ENCODE measurements at regions of chr18 and their contacts with region 1.

Region 1: DNA sequence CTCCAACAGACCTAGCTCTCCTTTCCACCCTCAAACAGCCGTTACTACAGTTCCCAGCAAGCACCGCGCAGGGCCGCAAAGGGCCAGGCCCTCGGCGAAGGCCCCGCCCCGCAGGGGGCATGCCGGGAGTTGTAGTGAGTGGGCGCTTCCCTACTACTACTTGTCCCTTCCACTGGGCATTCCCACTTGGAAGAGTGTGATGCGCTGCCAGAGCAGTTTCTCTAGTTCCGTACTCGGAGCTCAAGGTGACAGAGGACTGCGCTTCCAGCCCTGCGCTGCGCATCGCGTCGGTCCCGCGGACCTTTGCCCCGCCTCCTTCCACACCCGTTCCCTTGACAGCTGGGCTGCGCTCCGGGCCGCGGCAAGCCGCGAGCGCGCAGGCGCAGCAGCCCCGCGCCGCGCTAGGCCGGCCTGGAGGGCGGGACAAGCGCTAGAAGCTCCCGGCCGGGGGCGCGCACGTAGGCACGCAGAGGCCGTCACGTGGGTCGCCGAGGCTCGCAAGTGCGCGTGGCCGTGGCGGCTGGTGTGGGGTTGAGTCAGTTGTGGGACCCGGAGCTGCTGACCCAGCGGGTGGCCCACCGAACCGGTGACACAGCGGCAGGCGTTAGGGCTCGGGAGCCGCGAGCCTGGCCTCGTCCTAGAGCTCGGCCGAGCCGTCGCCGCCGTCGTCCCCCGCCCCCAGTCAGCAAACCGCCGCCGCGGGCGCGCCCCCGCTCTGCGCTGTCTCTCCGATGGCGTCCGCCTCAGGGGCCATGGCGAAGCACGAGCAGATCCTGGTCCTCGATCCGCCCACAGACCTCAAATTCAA is at the start of gene VAPA:
- DNase-seq: peak; percentile 95
- H3K4me3 ChIP-seq: peak within 1 kb of the TSS; percentile 80 to 97 (median 92)
- H3K27ac ChIP-seq: peak within 1 kb of the TSS; percentile 99 to 100 (median 99)
- H3K4me1 ChIP-seq: peaks cover 7 to 39% (median 32%) of the 10 kb centered on the region in 4 donors
- H3K27me3 ChIP-seq: no peaks in the 10 kb centered on the region
- CTCF ChIP-seq: peak in 1 of 5 experiments; percentile 10
- EP300 ChIP-seq: no peak
- POLR2A ChIP-seq: peak; percentile 97
- total RNA-seq, gene VAPA: 110 to 322 (median 213) TPM

Region 2: DNA sequence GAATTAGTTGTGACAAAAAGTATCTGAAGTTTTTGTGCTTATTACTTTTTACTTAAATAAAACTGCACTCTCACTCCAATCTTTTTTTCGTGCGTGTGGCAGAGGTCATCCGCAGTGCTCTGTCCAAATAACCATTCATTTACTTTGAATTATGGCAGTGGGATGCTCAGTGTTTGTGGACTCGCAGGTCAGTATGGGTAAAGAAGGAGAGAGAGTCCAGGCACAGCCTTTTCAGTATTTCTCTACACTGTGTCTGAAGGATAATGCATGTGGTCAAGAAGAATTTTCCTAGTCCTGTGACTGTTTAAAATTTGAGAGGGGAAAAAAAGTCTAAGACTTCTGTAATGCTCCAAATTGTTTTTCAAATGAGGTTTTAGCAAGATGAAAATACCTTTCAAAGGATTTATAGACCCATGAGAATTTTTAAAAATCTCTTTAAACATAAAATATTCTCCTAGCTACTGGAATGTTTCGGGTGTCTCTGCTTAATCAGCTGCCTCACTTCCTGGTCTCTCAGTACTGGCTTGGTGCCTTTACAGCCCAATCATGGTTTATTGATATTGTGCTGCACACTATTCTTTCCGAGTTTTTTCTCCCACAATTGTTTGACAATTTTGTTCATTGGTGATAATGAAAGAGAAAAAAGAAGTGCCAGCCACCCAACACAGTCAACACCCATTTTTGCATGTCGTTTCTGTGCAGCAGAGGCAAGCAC is 1893.4 kb before region 1 on chr18:
- in situ Hi-C with region 1: no loop called
- intact Hi-C with region 1: no loop called
- DNase-seq: no peak
- H3K4me3 ChIP-seq: no peak overlapping the region
- H3K27ac ChIP-seq: peak overlapping the region in 1 of 4 donors; percentile 41
- H3K4me1 ChIP-seq: peaks cover 0 to 7% (median 0%) of the 10 kb centered on the region in 4 donors
- H3K27me3 ChIP-seq: no peaks in the 10 kb centered on the region
- CTCF ChIP-seq: no peak
- EP300 ChIP-seq: no peak
- POLR2A ChIP-seq: no peak

Region 3: GRCh38 chr18:9614401-9615279 is 299.1 kb before region 1 on chr18 and contains the start of gene PPP4R1:
- in situ Hi-C with region 1: loop called in 1 of 4 experiments (anchors 25 kb)
- intact Hi-C with region 1: no loop called
- DNase-seq: peak; percentile 81
- H3K4me3 ChIP-seq: peak within 1 kb of the TSS; percentile 35 to 96 (median 90)
- H3K27ac ChIP-seq: peak within 1 kb of the TSS; percentile 94 to 98 (median 98)
- H3K4me1 ChIP-seq: peaks cover 3 to 29% (median 19%) of the 10 kb centered on the region in 4 donors
- H3K27me3 ChIP-seq: no peaks in the 10 kb centered on the region
- CTCF ChIP-seq: no peak
- EP300 ChIP-seq: no peak
- POLR2A ChIP-seq: no peak
- total RNA-seq, gene PPP4R1: 46.0 to 163 (median 79.2) TPM

Region 4: DNA sequence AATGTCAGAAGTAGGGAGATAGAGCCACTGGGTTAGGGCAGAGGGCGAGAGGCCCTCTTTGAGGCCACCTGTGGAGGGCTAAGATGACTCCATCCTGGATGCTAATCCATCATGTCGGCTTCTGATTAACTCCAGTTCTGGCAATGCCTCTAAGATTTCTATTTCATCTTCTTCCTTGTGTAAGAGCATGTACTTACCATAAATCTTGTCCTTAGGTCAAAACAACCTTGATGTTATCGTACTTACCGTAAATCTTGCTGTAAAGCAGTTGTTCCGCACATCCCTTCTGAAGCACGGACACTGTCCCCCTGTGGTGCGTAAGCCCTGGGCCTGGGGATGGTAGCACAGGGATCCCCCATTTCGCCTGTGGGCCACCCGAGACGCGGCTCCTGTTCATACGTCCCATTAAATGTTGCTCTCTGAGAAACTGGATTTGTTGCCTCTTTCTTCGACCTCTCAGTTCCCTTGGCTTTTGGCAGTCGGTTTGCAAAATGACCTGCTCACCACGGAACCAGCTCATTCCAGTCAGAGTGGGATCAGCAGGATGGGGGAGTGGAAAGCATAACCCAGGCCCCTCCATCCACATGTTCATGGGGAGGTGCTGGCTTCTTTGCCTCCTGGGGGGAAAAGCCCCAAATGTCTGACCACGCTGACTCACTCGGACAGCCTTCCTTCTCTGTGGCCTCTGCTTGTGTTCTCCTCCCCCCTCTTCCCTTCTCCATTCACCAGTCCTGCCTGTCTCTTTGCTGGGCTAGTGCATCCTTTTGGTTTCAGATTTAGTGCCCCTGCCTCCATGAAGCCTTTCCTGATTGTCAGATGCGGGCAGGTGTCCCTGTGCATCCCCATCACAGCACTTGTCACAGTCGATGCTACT is 155.7 kb before region 1 on chr18:
- in situ Hi-C with region 1: no loop called
- intact Hi-C with region 1: no loop called
- DNase-seq: no peak
- H3K4me3 ChIP-seq: no peak overlapping the region
- H3K27ac ChIP-seq: no peak overlapping the region
- H3K4me1 ChIP-seq: peaks cover 0 to 20% (median 8%) of the 10 kb centered on the region in 4 donors
- H3K27me3 ChIP-seq: no peaks in the 10 kb centered on the region
- CTCF ChIP-seq: no peak
- EP300 ChIP-seq: no peak
- POLR2A ChIP-seq: no peak

Region 5: GRCh38 chr18:9849407-9850281 is 64.1 kb before region 1 on chr18:
- in situ Hi-C with region 1: no loop called
- intact Hi-C with region 1: loop called (anchors 10 kb)
- DNase-seq: peak; percentile 50
- H3K4me3 ChIP-seq: no peak overlapping the region
- H3K27ac ChIP-seq: peak overlapping the region in 3 of 4 donors; percentile 31 to 60 (median 59)
- H3K4me1 ChIP-seq: peaks cover 0 to 50% (median 22%) of the 10 kb centered on the region in 4 donors
- H3K27me3 ChIP-seq: no peaks in the 10 kb centered on the region
- CTCF ChIP-seq: no peak
- EP300 ChIP-seq: no peak
- POLR2A ChIP-seq: no peak

Region 6: DNA sequence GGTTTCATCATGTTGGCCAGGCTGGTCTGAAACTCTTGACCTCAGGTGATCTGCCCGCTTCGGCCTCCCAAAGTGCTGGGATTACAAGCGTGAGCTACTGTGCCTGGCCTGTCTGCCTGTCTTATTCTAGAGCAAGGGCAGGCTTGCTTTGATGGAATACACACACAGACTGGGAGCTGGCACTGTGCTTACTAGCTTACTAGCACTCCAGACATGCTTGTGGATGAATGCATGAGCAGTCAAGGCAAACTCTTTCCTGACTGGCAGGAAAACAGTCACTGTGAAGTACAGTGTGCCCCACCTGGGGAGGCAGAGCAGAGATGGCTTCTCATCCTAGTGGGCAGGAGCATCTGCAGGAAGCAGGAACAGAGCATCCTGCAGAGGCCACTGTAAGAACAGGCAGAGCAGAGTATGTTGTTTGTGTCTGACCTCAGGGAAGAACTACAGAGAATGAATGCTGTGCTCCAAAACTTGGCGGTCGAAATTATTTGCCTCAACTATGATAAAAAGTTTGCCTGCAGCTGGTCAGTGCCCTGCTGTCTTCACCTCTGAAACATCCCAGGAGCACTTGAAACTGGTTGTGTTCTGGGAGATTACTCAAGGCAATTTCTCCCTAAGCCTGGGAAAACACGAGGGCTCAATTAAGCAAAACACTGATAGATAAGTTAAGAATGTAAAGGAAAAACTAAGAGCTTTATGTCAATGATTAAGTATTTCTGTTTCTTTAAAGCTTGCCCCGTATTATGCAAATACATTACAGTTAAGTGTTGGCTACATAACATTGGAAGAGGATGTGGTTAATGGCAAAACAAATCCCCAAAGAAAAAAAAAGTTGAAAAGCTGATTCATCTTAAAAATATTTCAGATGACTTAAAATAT is 102.5 kb after region 1 on chr18:
- in situ Hi-C with region 1: no loop called
- intact Hi-C with region 1: no loop called
- DNase-seq: no peak
- H3K4me3 ChIP-seq: no peak overlapping the region
- H3K27ac ChIP-seq: peak overlapping the region; percentile 43 to 56 (median 44)
- H3K4me1 ChIP-seq: peaks cover 3 to 24% (median 8%) of the 10 kb centered on the region in 4 donors
- H3K27me3 ChIP-seq: no peaks in the 10 kb centered on the region
- CTCF ChIP-seq: no peak
- EP300 ChIP-seq: no peak
- POLR2A ChIP-seq: no peak

Region 7: GRCh38 chr18:10121786-10122542 is 208.2 kb after region 1 on chr18:
- in situ Hi-C with region 1: no loop called
- intact Hi-C with region 1: no loop called
- DNase-seq: no peak
- H3K4me3 ChIP-seq: no peak overlapping the region
- H3K27ac ChIP-seq: no peak overlapping the region
- H3K4me1 ChIP-seq: peaks cover 0 to 17% (median 9%) of the 10 kb centered on the region in 4 donors
- H3K27me3 ChIP-seq: no peaks in the 10 kb centered on the region
- CTCF ChIP-seq: no peak
- EP300 ChIP-seq: no peak
- POLR2A ChIP-seq: no peak